Gastrocnemius medialis (tissue), 4 donors: ENCODE measurements at regions of chr10 and their contacts with region 1.

Region 1: DNA sequence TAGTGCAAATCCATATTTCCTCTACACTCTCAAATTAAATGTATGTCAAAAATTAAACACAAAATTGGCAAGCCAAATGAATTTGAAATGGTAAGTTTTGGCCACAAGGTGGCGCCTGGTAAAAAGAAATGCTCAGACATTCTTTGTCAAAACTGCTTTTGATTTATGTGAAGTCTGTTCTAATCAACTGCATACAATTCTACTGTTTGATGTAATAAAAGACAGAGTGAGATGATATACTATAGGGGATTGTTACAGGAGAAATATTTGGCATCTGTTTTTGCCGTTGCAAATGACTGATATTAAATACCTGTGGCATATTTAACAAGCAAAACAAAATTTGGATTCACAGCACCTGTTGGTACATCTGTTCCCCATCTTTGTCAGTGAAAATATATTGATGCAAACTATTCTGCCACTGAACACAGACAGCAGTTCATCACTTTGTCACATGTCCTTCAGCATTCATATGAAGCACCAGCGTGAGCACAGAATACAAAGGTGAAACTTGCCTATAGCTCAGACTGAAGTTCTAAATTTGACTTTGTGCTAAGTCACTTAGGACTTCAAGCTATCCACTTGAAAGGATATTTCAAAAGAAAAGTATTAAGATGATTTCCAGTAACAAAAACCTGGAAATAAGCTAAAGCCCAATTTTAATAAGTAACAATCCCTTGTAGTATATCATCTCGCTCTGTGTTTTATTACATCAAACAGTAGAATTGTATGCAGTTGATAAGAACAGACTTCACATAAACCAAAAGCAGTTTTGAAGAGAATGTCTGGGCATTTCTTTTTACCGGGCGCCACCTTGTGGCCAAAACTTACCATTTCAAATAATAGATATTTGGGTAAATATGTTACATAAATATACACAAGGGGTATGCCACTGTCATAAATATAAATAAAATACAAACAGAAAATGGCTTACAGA is 10.2 kb upstream of the CH25H start:
- DNase-seq: peak in 1 of 2 donors; percentile 28
- ATAC-seq: peak; percentile 46 to 82
- H3K4me3 ChIP-seq: peak overlapping the region in 2 of 4 donors; percentile 9 to 15
- H3K27ac ChIP-seq: peak overlapping the region; percentile 59 to 68 (median 62)
- H3K4me1 ChIP-seq: peaks cover 6 to 8% of the 10 kb centered on the region in 2 donors
- H3K27me3 ChIP-seq: no peaks in the 10 kb centered on the region
- CTCF ChIP-seq: peak; percentile 63 to 80 (median 68)
- POLR2A ChIP-seq: no peak

Region 2: DNA sequence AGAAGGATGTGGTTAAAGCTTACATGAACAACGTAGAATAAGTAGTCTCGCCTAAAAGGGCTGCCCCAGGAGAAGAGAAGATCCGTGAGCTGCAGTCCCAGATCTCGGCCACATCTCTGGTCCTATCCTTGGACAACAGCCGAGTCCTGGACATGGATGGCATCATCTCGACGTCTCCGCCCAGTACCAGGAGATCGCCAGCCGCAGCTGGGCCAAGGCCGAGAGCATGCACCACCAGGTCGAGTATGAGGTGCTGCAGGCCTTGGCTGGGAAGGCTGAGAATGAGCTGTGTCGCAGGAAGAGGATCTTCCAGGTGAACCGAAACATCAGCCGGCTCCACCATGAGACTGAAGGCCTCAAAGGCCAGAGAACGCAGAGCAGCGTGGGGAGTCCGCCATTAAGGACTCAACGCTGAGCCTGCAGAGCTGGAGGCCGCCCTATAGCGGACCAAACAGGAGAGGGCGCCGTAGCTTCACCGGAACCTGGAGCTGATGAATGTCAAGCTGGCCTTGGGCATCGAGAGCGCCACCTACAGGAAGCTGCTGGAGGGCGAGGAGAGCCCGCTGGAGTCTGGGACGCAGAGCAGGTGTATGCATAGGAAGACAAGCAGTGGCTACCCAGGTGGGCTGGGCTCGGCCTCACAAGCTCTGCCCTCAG is 489.1 kb before region 1 on chr10:
- in situ Hi-C with region 1: no loop called
- intact Hi-C with region 1: no loop called
- DNase-seq: no peak
- ATAC-seq: no peak
- H3K4me3 ChIP-seq: no peak overlapping the region
- H3K27ac ChIP-seq: no peak overlapping the region
- H3K4me1 ChIP-seq: no peaks in the 10 kb centered on the region
- H3K27me3 ChIP-seq: no peaks in the 10 kb centered on the region
- CTCF ChIP-seq: no peak
- POLR2A ChIP-seq: no peak

Region 3: DNA sequence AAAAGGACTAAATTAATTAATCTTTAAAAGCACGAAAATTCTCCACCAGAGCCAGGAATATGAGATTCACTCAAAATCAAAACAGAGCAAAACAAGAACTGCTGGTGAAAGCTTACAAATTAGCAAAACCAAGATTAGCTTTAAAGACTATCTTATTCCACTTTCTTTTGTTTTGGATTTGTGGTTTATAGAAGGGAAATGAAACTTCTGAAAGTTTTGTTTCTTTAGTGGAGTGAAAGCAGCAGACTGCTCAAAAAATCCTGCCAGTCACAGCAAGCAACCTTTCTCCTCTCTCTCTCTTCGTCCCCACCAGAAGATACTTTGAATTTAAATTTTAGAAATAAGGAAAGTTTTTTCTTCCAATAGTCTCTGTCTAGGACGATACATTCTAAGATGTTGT is 272.5 kb before region 1 on chr10:
- in situ Hi-C with region 1: no loop called
- intact Hi-C with region 1: no loop called
- DNase-seq: no peak
- ATAC-seq: no peak
- H3K4me3 ChIP-seq: no peak overlapping the region
- H3K27ac ChIP-seq: peak overlapping the region in 1 of 4 donors; percentile 25
- H3K4me1 ChIP-seq: no peaks in the 10 kb centered on the region
- H3K27me3 ChIP-seq: no peaks in the 10 kb centered on the region
- CTCF ChIP-seq: no peak
- POLR2A ChIP-seq: no peak

Region 4: GRCh38 chr10:89029785-89030437 is 187.4 kb before region 1 on chr10:
- in situ Hi-C with region 1: loop called (anchors 5 kb)
- intact Hi-C with region 1: loop called (anchors 1 kb)
- DNase-seq: peak; percentile 38 to 45
- ATAC-seq: peak; percentile 57 to 66
- H3K4me3 ChIP-seq: no peak overlapping the region
- H3K27ac ChIP-seq: no peak overlapping the region
- H3K4me1 ChIP-seq: peaks cover 0 to 6% of the 10 kb centered on the region in 2 donors
- H3K27me3 ChIP-seq: no peaks in the 10 kb centered on the region
- CTCF ChIP-seq: peak; percentile 65 to 86 (median 84)
- POLR2A ChIP-seq: no peak